Stomach (tissue), 19 donors: ENCODE measurements at regions of chr12 and their contacts with region 1.

Region 1: DNA sequence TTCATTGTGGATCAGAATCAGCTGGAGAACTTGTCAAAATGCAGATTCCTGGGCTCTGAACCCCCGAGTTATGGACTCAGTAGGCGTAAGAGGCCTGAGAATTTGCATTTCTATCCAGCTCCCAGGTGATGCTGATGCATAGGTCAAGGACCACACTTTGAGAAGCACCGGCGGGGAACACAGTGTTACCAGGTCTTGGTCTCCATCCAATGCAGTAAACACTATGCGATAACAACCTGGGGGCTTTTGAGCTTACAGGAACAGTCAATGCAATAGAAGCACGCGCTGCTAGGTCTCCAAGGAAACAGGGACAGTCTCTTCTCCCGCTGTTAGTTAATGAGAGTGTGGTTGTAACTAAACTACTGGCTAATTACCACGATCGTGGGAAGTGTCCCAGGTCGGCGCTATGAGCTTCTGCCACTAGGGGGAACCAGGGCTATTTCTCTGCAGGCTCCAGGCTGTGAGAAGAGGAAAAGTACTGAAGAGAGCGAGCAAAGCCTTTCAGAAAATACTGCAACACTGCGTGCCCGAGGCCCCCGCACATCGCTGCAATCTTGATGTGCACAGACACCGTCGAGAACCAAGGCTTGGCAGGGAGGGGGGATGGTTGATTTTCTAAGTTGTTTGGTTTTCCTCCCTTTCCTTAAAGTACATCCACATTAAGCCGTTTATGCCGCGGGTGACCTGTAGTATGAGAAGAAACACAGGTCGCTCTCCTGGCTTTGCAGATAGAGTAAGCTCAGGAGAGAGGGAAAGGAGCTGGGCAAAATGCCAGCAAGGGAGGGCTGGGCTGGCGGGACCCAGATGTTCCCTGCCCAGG is 52.0 kb upstream of the KCNA1 start:
- DNase-seq: peak; percentile 78 to 88
- H3K4me3 ChIP-seq: peak overlapping the region in 3 of 4 donors; percentile 2 to 34 (median 14)
- H3K27ac ChIP-seq: peak overlapping the region in 1 of 5 donors; percentile 69
- H3K4me1 ChIP-seq: peaks cover 8 to 24% (median 13%) of the 10 kb centered on the region in 4 donors
- H3K27me3 ChIP-seq: peaks cover 0 to 47% (median 8%) of the 10 kb centered on the region in 3 donors
- CTCF ChIP-seq: peak in 5 of 7 experiments; percentile 62 to 86 (median 81)
- EP300 ChIP-seq: no peak
- POLR2A ChIP-seq: no peak

Region 2: GRCh38 chr12:4579305-4580102 is 278.2 kb before region 1 on chr12:
- intact Hi-C with region 1: no loop called
- DNase-seq: peak in 1 of 2 donors; percentile 38
- H3K4me3 ChIP-seq: no peak overlapping the region
- H3K27ac ChIP-seq: no peak overlapping the region
- H3K4me1 ChIP-seq: no peaks in the 10 kb centered on the region
- H3K27me3 ChIP-seq: peaks cover 0 to 17% (median 0%) of the 10 kb centered on the region in 3 donors
- CTCF ChIP-seq: no peak
- EP300 ChIP-seq: no peak
- POLR2A ChIP-seq: no peak

Region 3: DNA sequence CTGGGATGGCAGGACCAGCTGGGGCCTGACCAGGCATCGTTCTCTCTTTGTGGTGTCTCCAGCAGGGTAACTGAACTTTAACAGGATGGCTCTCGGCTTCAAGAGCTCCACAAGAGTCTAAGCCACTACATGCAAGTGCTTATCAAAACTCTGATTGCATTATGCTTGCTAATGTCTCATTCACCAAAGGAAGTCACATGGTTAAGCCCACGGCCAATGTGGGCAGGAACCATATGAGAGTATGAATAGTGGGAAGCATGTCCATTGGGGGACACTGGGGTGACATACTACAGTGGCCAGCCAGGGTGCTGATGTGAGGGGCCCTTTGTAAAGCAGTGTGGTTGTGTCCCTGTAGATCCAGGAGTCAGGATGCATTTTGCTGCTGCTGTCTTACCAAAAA is 151.0 kb after region 1 on chr12:
- intact Hi-C with region 1: loop called (anchors 5 kb)
- DNase-seq: no peak
- H3K4me3 ChIP-seq: no peak overlapping the region
- H3K27ac ChIP-seq: no peak overlapping the region
- H3K4me1 ChIP-seq: no peaks in the 10 kb centered on the region
- H3K27me3 ChIP-seq: peaks cover 0 to 7% (median 0%) of the 10 kb centered on the region in 3 donors
- CTCF ChIP-seq: no peak
- EP300 ChIP-seq: no peak
- POLR2A ChIP-seq: no peak

Region 4: GRCh38 chr12:5083955-5084849 is 226.5 kb after region 1 on chr12:
- intact Hi-C with region 1: loop called (anchors 5 kb)
- DNase-seq: peak in 1 of 2 donors; percentile 84
- H3K4me3 ChIP-seq: no peak overlapping the region
- H3K27ac ChIP-seq: no peak overlapping the region
- H3K4me1 ChIP-seq: no peaks in the 10 kb centered on the region
- H3K27me3 ChIP-seq: peaks cover 0 to 28% (median 0%) of the 10 kb centered on the region in 3 donors
- CTCF ChIP-seq: peak in 5 of 7 experiments; percentile 39 to 83 (median 58)
- EP300 ChIP-seq: no peak
- POLR2A ChIP-seq: no peak